Mucosa of descending colon (tissue), 3 donors: ENCODE measurements at regions of chr6 and their contacts with region 1.

Region 1: DNA sequence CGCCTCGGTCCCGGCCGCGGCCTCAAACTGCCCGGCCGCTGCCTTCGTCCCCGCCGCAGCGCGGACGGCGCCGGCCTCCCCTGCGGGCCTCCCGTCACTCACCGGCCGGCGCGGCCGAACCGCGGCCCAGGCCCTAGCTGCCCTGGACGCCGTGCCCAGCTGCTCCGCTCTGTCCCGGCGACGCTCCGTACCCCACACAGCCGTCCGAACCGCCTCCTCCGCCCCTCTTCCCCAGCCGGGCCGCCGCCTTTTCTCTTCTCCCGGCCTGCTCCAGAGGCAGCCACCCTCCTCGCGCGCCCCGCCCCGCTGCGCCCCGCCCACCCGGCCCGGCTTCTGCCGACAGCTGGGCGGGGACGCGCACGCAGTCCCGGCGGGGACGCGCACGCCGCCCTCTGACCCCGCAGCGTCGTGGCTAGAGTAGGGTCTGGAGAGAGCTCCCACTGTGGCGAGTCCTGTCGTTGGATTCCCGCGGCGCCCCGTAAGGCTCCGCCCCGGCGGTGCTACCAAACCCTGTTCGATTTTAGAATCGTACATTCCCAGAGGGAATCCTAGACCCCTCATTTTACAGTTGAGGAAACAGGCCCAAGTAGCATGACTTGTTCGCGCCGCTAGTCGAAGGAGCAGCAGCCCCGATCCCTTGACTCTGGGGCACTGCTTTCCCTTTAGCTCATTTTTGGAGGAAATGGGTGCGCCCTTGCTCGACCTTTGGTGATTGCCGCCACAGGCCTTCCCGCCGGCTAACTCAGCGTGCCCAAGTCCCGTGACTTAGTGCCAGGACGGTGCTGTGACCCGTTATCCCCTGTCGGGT is at the start of gene FBXO30:
- DNase-seq: peak; percentile 90 to 94 (median 93)
- ATAC-seq: peak; percentile 99
- H3K4me3 ChIP-seq: peak within 1 kb of the TSS; percentile 56
- H3K4me1 ChIP-seq: peaks cover 4% of the 10 kb centered on the region
- CTCF ChIP-seq: no peak
- total RNA-seq, gene FBXO30: 6.3 to 34.7 (median 7.1) TPM

Region 2: GRCh38 chr6:145373841-145374240 is 440.9 kb before region 1 on chr6:
- intact Hi-C with region 1: no loop called
- DNase-seq: no peak
- ATAC-seq: no peak
- H3K4me3 ChIP-seq: no peak overlapping the region
- H3K4me1 ChIP-seq: no peaks in the 10 kb centered on the region
- CTCF ChIP-seq: no peak

Region 3: DNA sequence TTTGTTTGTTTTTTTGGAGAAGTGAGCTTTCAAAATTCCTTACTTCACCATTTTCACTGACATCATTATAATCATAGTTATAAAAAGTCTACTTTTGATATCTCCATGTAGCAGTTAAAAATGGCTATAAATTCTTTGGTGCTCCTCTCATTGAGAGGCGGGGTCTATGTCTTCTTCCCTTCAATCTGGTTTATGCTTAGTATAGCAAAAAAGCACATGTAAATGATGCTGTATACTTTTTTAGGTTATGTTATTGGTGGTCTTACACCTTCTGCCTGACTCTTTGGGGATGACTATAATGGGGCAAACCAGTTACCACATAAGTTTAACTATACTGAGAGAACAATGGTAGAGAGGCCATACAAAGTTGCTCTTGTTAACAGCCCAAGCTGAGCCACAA is 369.0 kb before region 1 on chr6:
- intact Hi-C with region 1: no loop called
- DNase-seq: no peak
- ATAC-seq: no peak
- H3K4me3 ChIP-seq: no peak overlapping the region
- H3K4me1 ChIP-seq: no peaks in the 10 kb centered on the region
- CTCF ChIP-seq: no peak

Region 4: GRCh38 chr6:145734486-145735355 is 80.0 kb before region 1 on chr6:
- intact Hi-C with region 1: loop called in 1 of 2 experiments (anchors 10 kb)
- DNase-seq: peak; percentile 90 to 93 (median 93)
- ATAC-seq: peak; percentile 94
- H3K4me3 ChIP-seq: peak overlapping the region; percentile 42
- H3K4me1 ChIP-seq: peaks cover 4% of the 10 kb centered on the region
- CTCF ChIP-seq: no peak